Left lung (tissue), 14 donors: ENCODE measurements at regions of chr6 and their contacts with region 1.

Region 1: GRCh38 chr6:111709615-111710398 is 104.1 kb upstream of the TRAF3IP2 start:
- DNase-seq: peak in 2 of 4 donors; percentile 84 to 89
- ATAC-seq: peak; percentile 97
- H3K4me3 ChIP-seq: no peak overlapping the region
- H3K27ac ChIP-seq: no peak overlapping the region
- H3K4me1 ChIP-seq: peaks cover 7 to 26% of the 10 kb centered on the region in 2 donors
- H3K27me3 ChIP-seq: no peaks in the 10 kb centered on the region
- CTCF ChIP-seq: peak; percentile 67 to 69

Region 2: GRCh38 chr6:111950661-111951496 is 241.1 kb after region 1 on chr6:
- intact Hi-C with region 1: no loop called
- DNase-seq: no peak
- ATAC-seq: no peak
- H3K4me3 ChIP-seq: no peak overlapping the region
- H3K27ac ChIP-seq: no peak overlapping the region
- H3K4me1 ChIP-seq: peaks cover 0 to 11% of the 10 kb centered on the region in 2 donors
- H3K27me3 ChIP-seq: no peaks in the 10 kb centered on the region
- CTCF ChIP-seq: no peak

Region 3: GRCh38 chr6:111997078-111997852 is 287.5 kb after region 1 on chr6:
- intact Hi-C with region 1: loop called in 1 of 2 experiments (anchors 5 kb)
- DNase-seq: peak in 3 of 4 donors; percentile 84 to 90 (median 88)
- ATAC-seq: peak; percentile 100
- H3K4me3 ChIP-seq: no peak overlapping the region
- H3K27ac ChIP-seq: no peak overlapping the region
- H3K4me1 ChIP-seq: peaks cover 0 to 22% of the 10 kb centered on the region in 2 donors
- H3K27me3 ChIP-seq: no peaks in the 10 kb centered on the region
- CTCF ChIP-seq: peak; percentile 85 to 89

Region 4: DNA sequence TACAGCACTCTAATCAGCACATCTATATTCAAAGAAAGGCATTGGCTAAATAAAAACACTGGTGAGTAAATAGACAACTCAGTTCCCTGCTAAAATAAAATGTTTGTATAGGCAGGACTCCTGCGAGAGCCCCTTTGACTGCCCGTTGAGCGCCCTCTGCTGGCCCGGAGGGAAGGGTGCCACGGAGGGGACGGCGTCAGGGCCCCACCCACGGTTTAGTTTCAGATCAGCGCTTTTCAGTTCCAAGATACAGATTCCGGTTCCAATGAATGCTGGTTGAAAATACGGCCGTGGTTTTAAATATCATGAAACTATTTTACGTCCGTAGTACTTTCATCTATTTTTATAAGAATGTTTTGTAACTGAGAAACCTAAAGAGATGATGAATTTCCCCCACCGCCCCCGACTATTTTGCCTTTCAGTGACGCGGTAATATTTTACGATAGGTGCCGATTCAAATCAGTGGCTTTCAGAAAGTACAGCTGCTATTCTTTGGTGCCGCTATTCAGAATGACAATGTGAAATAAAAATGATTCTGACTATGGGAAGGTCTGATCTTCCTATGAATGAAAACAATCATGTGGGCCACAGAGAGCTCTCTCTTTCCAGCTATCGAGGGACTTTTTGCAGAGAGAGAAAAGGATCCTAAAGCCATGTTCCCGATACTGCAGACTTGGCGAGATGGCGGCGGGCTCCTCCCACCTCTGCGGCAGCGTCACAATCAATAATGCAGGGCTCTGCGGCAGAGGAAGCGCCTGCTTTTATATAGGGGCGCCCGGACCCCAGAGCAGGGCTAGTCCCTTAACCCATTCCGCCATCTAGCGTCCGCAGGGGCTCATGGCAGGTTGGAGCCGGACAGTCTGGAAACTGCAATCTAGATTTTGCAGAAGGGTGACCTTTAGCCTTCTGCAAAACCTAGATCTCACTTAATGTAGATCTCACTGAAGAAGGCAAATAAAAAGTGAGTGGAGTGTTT is 333.5 kb after region 1 on chr6:
- intact Hi-C with region 1: loop called in 1 of 2 experiments (anchors 5 kb)
- DNase-seq: peak; percentile 90 to 97 (median 93)
- ATAC-seq: peak; percentile 99
- H3K4me3 ChIP-seq: peak overlapping the region; percentile 43 to 56
- H3K27ac ChIP-seq: peak overlapping the region; percentile 82 to 86
- H3K4me1 ChIP-seq: peaks cover 0 to 2% of the 10 kb centered on the region in 2 donors
- H3K27me3 ChIP-seq: no peaks in the 10 kb centered on the region
- CTCF ChIP-seq: peak; percentile 96 to 97